ENCODE measurements at regions of chr6 and their contacts with region 1.

Region 1: DNA sequence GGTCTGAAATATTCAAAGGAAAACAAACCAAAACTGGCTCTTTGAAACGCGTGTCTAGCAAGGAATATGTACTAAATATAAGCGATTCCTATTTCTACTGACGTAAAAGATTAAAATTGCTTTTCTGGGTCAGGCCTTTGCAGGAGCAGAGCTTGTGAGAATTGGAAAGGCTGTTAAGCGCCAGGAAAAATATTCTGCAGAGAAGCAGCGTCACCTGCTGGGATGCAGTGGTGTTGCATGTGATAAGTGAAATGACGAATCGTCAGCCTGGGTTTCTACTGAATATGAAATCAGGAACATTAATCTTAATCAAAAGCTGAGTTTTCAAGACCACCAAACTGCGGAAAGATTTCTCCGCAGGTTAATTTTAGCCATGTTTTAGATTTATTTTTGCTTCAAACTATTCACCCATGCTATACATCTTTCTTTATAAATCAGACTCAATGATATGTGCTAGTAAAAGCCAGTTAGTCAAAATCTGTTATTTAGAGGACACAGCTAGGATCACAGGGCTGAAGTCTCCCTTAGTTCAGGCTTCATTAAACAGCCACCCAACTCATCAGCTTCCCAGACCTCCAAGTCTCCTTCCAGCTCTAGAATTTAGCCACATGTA is 67.4 kb downstream of the ALDH8A1 start:
- DNase-seq: peak; percentile 40
- CTCF ChIP-seq: peak; percentile 95

Region 2: DNA sequence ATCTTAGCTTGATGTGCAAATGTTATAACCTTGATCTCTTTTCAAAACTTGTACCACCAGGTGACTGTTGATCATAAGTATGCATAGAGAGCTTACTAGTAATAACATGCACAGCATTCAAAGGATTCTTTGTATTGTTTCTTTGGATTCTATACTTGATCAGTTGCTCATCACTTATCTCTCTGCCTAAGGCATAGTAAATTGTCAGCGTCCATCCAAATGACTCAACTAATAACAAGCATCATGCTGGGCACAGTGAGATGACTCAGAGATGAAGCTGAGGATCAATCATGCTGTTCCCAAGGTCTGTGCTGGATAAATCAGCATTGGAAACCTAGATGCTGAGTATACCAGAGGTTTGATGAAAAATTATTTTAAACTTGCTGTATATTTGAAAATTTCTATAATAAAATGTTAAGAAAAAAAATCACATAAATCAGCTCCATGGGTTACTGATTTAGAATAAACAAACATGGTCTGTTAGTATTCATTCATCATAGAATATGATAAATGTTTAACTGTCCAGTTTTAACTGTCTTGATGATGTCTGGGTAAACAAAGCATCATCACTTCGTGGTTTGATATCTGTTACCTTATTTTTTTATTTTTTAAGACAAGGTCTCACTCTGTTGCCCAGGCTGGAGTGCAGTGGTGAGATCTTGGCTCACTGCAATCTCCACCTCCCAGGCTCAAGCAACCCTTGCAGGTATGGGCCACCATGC is 519.1 kb before region 1 on chr6:
- in situ Hi-C with region 1: no loop called
- DNase-seq: no peak
- CTCF ChIP-seq: no peak

Region 3: DNA sequence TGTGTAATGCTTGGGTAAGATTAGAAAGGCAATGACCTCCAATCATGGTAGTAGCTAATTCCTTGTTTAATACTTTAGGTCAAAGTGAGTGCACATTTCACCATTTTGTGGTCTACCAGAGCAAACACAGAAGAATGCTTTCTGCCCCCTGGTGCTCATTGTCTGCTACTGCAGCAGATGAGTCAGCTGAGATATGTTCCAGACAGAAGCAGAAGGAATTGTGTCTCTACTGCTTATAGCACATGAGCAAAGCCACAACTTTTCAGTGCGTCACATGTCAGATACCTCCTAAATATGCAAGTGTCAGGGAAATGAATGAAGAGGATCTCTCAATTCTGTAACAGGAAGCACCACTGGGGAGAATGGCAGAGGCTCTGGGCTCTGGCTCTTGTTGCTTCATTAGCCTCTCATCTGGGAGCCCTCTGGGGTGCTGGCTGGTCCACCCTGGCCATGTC is 241.5 kb before region 1 on chr6:
- in situ Hi-C with region 1: loop called (anchors 10 kb)
- DNase-seq: peak; percentile 55
- CTCF ChIP-seq: peak; percentile 93

Region 4: GRCh38 chr6:134809132-134809531 is 73.4 kb before region 1 on chr6:
- in situ Hi-C with region 1: no loop called
- DNase-seq: no peak
- CTCF ChIP-seq: no peak